ENCODE measurements at regions of chr5 and their contacts with region 1.

Region 1: GRCh38 chr5:43514816-43515677 is at the start of gene C5orf34:
- DNase-seq: peak; percentile 97

Region 2: GRCh38 chr5:43336159-43336558 is 178.9 kb before region 1 on chr5:
- CTCF ChIA-PET with region 1: no interaction called
- POLR2A ChIA-PET with region 1: no interaction called
- DNase-seq: no peak

Region 3: GRCh38 chr5:43437062-43437660 is 77.9 kb before region 1 on chr5:
- CTCF ChIA-PET with region 1: no interaction called
- POLR2A ChIA-PET with region 1: no interaction called
- DNase-seq: no peak

Region 4: GRCh38 chr5:43469702-43470366 is 45.2 kb before region 1 on chr5:
- CTCF ChIA-PET with region 1: no interaction called
- POLR2A ChIA-PET with region 1: no interaction called
- DNase-seq: no peak

Region 5: DNA sequence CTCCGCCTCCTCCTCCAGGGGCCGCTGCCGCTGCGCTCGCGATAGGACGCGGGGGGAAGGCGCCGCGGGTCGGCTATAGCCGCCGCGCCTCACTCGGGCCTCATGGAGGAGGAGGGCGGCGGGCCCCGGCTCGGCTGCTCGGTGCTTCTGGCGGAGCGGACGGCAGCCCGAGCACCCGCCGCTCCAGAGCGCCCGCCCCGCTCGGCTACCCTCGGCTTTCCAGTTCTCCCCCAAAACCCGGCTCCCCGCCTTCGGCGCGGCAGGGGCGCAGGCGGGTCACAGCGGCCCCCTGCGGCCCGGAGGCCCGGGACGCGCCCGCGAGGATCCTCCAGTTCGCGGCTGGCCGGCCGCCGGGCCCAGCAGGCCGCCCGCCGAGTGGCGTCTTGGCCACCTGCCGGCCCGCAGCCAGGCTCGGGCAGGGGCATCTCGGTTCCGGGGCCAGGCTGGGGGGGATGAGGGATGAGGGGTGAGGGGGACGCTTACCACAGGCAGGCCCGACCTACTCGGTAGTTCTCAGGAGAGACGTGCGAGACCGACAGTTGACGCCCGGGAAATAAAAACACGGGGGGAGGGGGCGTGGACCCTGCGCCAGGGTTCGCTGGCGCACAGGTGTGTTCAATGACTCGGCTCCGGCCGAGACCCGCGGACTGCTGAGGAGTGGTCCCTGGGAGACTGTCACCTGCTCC is 42.0 kb after region 1 on chr5 and contains the start of gene PAIP1:
- CTCF ChIA-PET with region 1: interaction called, 4 read pairs
- POLR2A ChIA-PET with region 1: interaction called, 11 read pairs
- DNase-seq: peak; percentile 78

Measured in HEK293T (cell line).